Caco-2 (cell line): ENCODE measurements at regions of chr14 and their contacts with region 1.

Region 1: GRCh38 chr14:21510735-21511657 is at the start of gene METTL3:
- DNase-seq: peak; percentile 94 to 98
- H3K4me3 ChIP-seq: peak within 1 kb of the TSS; percentile 89
- H3K4me3 Mint-ChIP-seq: peak within 1 kb of the TSS; percentile 96
- H3K27ac Mint-ChIP-seq: peak within 1 kb of the TSS; percentile 97
- H3K4me1 ChIP-seq: no peaks in the 10 kb centered on the region
- H3K4me1 Mint-ChIP-seq: peaks cover 8% of the 10 kb centered on the region
- H3K27me3 ChIP-seq: no peaks in the 10 kb centered on the region
- H3K27me3 Mint-ChIP-seq: no peaks in the 10 kb centered on the region
- CTCF ChIP-seq: no peak
- total RNA-seq, gene METTL3: 40.1 and 43.8 TPM in 2 replicates

Region 2: DNA sequence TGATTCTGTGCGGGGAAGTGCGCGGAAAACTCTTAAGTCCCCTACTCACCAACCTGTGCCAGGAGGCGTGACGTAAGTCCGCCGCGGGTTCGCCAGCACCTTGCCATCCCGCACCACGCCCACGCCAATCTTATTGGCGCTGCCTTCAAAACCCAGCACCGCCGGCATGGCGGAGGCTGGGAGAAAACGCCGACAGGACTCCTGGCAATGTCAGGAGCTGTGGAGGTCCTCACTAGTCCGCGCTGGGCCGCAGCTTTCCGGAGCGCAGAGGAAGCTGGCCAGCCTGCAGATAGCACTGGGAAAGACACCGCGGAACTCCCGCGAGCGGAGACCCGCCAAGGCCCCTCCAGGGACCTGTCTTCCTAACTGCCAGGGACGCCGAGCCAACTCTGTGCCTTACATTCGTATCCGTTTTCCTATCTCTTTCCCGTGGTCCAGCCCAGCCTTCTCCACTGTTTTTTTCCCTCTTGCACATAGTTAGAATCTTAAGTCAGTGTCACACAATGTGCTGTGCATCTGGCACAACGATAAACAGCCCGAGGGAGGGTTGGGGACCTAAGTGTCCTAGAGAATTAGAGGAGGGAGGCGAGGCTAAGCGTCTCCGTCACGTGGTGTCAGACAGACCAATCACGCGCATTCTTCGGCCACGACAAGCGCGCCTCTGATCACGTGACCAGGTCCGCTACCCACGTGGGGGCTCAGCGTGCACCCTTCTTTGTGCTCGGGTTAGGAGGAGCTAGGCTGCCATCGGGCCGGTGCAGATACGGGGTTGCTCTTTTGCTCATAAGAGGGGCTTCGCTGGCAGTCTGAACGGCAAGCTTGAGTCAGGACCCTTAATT is 1056.3 kb before region 1 on chr14 and contains the starts of genes APEX1 and OSGEP:
- CTCF ChIA-PET with region 1: no interaction called
- POLR2A ChIA-PET with region 1: no interaction called
- intact Hi-C with region 1: loop called (anchors 5 kb)
- DNase-seq: peak; percentile 97 to 99
- H3K4me3 ChIP-seq: peak within 1 kb of the TSS; percentile 63
- H3K4me3 Mint-ChIP-seq: no peak within 1 kb of the TSS
- H3K27ac Mint-ChIP-seq: no peak within 1 kb of the TSS
- H3K4me1 ChIP-seq: no peaks in the 10 kb centered on the region
- H3K4me1 Mint-ChIP-seq: peaks cover 1% of the 10 kb centered on the region
- H3K27me3 ChIP-seq: no peaks in the 10 kb centered on the region
- H3K27me3 Mint-ChIP-seq: no peaks in the 10 kb centered on the region
- CTCF ChIP-seq: no peak
- total RNA-seq, gene APEX1: 176 and 185 TPM in 2 replicates
- total RNA-seq, gene OSGEP: 63.1 and 64.3 TPM in 2 replicates

Region 3: GRCh38 chr14:21498553-21499526 is 12.2 kb before region 1 on chr14:
- CTCF ChIA-PET with region 1: interaction called, 15 read pairs
- POLR2A ChIA-PET with region 1: interaction called, 13 read pairs
- intact Hi-C with region 1: no loop called
- DNase-seq: peak in 1 of 2 experiments; percentile 70
- H3K4me3 ChIP-seq: no peak overlapping the region
- H3K4me3 Mint-ChIP-seq: no peak overlapping the region
- H3K27ac Mint-ChIP-seq: peak overlapping the region; percentile 22
- H3K4me1 ChIP-seq: 0 out of 2 replicates have a peak, but pooled peaks cover 11% of the 10 kb centered on the region
- H3K4me1 Mint-ChIP-seq: peaks cover 25% of the 10 kb centered on the region
- H3K27me3 ChIP-seq: no peaks in the 10 kb centered on the region
- H3K27me3 Mint-ChIP-seq: no peaks in the 10 kb centered on the region
- CTCF ChIP-seq: peak; percentile 30

Region 4: DNA sequence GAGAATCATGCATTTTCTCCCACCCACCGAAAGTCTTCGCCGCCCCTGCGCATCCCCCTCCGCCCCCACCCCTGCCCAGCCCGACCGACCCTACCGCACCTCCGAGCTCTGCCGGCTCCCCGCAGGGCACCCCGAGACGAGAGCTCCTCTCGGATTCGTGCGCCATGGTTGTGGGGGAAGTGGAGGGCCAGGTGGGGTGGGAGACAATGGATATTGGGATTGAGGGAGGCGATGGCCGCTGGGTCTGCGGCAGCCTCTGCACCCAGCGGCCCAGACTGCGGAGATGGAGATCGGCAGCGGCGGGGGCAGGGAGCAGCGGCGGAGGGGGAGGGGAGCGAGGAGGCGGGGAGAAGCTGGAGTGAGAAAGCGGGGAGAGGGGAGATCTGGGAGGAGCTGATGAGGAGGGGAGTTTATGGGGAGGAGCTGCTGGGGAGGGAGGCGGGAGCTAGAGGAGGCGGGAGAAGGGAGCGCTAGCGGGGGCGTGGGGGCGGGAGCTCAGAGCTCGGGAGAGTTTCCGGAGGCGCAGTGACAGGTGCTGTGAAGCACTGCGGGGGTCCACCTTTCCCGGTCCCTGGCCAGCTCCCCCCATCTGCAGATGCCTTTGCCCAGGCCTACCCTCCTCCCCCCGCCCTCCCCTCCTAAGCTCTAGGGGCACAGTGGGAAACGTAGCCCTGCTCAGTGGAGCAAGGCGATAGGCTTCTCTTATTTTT is 15.1 kb after region 1 on chr14 and contains the start of gene SALL2:
- CTCF ChIA-PET with region 1: interaction called, 12 read pairs
- POLR2A ChIA-PET with region 1: interaction called, 29 read pairs
- intact Hi-C with region 1: loop called (anchors 2 kb)
- DNase-seq: peak; percentile 79 to 89
- H3K4me3 ChIP-seq: peak within 1 kb of the TSS; percentile 79
- H3K4me3 Mint-ChIP-seq: peak within 1 kb of the TSS; percentile 74
- H3K27ac Mint-ChIP-seq: peak within 1 kb of the TSS; percentile 72
- H3K4me1 ChIP-seq: peaks cover 9% of the 10 kb centered on the region
- H3K4me1 Mint-ChIP-seq: peaks cover 13% of the 10 kb centered on the region
- H3K27me3 ChIP-seq: no peaks in the 10 kb centered on the region
- H3K27me3 Mint-ChIP-seq: no peaks in the 10 kb centered on the region
- CTCF ChIP-seq: no peak
- total RNA-seq, gene SALL2: 10.9 and 11.0 TPM in 2 replicates